GM18951 (cell line): ENCODE measurements at regions of chr19 and their contacts with region 1.

Region 1: DNA sequence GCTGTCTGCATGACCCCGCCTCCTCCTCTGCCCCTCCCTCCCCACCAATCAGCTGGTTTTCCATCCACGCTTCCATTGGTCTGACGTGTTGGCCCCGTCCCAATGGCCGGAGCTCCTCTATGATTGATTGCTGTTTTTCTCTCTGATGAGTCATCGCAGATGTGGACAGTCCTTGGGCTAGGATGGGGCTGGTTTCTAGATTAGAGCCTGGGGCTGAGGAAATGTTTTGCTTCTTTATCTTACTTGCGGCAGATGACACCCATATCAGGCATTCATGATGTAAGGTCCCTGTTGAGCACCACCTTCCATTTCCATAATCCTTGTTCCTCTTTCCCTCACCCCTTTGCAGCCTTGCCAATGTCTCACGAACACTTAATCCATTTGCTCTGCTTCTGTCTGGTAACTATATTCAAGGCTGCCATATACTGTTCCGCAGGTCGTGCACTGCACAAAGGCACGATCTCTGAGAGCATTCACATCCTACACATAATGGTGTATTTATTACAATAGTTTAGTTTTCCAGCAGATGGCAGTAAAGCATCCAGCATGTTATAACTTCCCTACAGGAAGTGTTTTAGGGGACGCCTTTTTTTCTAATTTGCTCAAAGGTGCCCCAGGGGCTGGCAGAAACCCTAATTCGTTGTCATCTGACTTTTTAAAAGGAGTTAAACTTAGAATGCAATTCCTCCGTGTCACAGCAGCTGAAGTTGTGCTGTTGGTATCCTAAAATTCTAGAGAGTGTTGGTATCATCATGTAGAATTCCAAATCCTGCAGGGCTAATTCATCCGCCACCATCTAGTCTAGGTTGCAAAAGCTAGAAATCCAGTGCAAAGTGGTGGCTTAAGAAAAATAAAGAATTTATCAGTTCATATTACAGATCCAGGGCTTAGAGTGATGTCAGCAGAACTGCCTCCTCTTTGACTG is 73.5 kb downstream of the MAP4K1 start:
- POLR2A ChIP-seq: no peak

Region 2: GRCh38 chr19:38452428-38453366 is 91.6 kb before region 1 on chr19:
- in situ Hi-C with region 1: no loop called
- POLR2A ChIP-seq: no peak

Region 3: DNA sequence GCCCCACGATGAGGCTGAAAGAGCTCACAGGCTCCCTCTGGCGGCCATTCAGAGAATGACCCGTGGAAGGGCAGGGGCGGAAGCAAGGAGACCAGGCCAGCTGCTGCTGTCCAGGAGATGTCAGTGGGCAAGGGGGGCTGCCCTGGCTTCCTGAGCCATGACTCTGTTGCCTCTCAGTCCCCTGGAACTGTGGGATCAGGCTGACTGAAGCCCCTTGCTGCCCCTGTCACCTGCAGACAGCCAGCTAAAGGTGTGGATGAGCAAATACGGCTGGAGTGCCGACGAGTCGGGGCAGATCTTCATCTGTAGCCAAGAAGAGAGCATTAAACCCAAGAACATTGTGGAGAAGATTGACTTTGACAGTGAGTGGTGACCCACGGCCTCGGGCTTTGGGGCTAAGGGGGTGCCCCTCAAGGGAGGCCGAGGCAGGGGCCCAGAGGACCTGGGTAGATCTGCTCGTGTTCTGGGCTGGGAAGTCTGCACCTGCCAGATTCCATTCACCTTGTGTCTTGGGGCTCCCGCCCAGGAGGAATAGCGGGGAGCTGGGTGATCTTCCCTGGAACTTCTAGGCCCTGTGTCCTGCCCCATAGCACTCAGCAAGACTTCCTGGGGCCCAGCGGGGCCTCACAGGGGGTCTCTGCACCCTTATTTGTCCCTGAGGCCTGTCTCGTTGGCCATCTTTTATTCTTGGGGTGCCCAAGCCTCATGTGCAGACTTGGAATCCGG is 90.6 kb after region 1 on chr19:
- in situ Hi-C with region 1: loop called (anchors 5 kb)
- POLR2A ChIP-seq: peak; percentile 34

Region 4: DNA sequence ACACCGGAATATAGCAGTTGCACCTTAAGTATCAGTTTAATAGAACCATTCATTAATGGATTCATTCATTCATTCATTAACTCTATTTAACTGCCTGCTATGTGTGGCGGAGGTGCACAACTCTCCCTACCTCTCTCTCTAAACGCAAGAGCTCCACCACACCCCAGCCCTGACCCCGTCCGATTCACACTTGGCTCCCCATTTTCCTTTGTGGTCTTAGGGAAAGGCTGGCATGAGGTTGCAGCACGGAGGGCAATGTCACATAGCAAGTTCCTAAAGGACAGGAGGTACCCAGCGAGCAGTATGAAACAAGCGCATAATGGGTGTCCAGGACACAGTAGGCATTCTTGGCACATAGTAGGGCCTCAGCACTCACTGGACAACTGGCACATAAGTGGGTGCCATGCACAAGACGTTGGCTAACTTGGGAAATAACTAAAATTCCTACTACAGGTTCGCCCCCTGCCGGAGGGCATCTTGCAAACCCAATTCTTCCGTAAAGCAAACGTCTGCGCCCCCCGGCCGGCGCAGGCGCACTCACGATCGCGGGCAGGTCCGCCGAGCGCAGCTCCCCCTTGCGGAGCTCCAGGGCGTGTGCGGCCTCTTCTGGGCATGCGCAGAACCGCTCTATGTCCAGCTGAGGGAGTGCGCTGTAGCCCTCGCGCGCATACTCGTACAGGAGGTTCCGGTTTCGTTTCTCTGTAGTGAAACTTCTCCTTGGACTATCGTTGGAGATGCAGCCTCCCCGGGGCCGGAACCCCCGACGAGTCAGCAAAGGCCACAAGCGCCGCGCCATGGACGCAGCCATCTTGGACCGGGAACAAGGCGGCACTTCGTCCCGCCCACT is 385.9 kb after region 1 on chr19 and contains the start of gene SARS2:
- in situ Hi-C with region 1: loop called (anchors 10 kb)
- POLR2A ChIP-seq: peak; percentile 81